ENCODE measurements at regions of chr12 and their contacts with region 1.

Region 1: GRCh38 chr12:93569656-93570551 is 2.6 kb upstream of the SOCS2 start:
- DNase-seq: peak; percentile 62 to 92 (median 82)

Region 2: GRCh38 chr12:93502802-93503623 is 66.9 kb before region 1 on chr12:
- intact Hi-C with region 1: loop called (anchors 5 kb)
- DNase-seq: peak in 36 of 42 donors; percentile 16 to 85 (median 62)

Region 3: DNA sequence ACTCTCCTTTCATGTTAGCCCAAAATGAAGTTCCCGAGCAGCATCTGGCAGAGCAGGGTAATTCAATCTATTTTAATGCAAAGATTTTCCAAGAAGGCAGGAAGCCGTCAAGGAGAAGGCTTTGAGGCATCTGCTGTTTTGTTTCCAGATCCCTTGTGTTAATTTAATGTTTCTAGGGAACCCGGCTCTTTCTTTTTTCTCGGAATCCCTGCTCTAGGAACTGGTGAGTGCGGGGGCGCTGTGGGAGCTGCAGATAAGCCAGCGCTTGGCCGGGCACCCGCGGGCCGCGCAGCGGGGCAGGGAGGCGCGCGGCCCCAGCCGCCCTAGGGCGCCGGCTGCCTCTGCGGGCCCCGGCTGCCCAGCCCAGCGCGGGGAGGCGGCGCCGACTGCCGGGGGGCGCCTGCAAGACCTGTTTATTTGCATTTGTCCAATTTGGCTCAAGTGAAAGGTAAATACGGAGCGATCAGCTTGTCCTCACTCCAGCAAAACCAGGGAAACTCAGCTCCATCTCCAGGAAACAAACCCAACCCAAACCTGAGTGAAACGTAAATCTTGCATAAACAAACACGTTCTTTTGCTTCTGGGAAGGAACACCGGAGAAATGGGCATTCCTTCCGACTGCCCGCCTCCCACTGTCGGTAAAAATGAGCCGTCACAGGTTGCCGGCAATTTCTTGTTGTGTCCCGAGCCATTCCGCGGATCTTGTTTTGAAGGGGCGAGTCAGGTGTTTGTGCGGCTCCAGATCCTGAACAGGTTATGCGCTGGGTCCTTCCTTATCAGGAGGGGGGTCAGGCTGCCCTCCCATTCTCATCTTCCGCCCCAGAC is 172.4 kb after region 1 on chr12:
- intact Hi-C with region 1: loop called (anchors 5 kb)
- DNase-seq: peak; percentile 55 to 91 (median 80)

Region 4: GRCh38 chr12:94101738-94102660 is 532.1 kb after region 1 on chr12:
- intact Hi-C with region 1: loop called (anchors 2 kb)
- DNase-seq: peak; percentile 71 to 93 (median 85)

Measured in head of caudate nucleus (tissue), 42 donors.